ENCODE measurements at regions of chr9 and their contacts with region 1.

Region 1: DNA sequence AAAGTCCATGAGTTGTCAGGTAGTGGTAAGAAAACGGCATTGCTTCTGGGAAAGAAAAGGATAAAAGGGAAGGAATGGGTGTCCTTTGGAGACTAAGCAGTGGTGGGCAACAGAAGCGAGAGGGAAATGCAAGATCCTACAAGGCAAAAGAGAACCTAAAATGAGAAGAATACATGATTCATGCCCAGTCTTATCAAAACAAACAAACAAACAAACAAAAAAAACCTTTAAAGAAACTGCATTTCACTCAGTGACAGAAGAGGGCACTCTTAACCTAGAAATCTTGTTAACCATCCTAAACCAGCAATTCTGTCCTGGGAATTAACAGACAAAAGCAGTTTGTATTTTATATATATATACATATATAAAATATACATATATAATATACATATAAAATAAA is 88.5 kb downstream of the SUSD1 start:
- DNase-seq: peak in 1 of 2 experiments; percentile 32
- H3K4me3 ChIP-seq: no peak overlapping the region
- H3K4me1 ChIP-seq: no peaks in the 10 kb centered on the region
- H3K27me3 ChIP-seq: no peaks in the 10 kb centered on the region

Region 2: DNA sequence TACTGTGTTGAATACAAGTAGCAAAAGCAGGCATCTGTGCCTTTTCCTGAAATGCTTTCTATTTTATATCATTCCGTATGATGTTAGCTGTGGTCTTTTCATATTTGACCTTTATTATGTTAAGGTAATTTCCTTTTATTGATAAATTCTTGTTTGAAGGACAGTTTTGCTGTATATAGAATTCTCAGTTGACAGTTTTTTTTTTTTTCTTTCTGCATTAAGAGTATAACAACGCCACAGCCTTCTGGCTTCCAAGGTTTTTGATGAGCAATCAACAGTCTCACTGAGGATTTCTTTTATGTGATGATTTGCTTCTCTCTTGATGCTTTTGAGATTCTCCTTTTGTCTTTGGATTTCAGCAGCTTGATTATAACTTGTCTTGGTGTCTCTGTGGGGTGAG is 538.0 kb before region 1 on chr9:
- in situ Hi-C with region 1: no loop called
- DNase-seq: no peak
- H3K4me3 ChIP-seq: no peak overlapping the region
- H3K4me1 ChIP-seq: no peaks in the 10 kb centered on the region
- H3K27me3 ChIP-seq: no peaks in the 10 kb centered on the region

Region 3: DNA sequence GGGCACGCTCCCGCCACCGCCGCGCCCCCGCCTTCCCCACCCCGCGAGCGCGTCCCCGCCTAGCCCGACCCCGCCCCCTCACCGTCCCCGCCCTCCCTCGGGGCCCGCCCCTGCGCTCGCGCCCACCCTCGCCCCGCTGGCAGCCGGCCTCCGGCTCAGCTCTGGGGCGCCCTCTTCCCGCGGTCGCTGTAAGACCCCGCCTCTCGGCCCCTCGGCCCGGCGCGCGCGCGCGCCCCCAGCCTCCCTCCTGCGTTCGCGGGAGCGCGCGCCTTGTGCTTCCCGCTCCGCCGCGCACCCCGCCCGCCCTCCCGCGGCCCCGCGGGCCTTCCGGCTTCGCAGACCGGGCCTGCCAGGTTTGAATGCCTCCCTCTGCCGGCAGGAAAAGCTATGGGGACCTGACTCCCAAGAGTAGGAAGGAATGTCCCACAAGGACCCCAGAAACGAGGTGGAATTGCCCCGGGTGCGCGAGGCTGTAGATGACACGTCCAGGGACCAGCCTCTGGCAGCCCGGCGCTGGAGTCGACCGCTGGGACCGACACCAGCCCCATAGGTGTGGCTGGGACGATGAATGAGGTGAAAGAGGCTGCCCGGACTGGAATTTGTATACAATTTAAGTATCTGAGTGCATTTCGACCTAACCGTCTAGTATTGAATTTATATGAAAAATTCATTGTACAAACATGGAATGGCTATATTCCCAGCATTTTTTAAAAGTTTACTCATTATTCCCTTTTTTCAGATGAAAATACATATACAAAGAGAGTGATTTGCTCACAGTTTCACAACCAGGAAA is 247.2 kb after region 1 on chr9:
- in situ Hi-C with region 1: no loop called
- DNase-seq: peak; percentile 89 to 95
- H3K4me3 ChIP-seq: peak overlapping the region; percentile 86
- H3K4me1 ChIP-seq: peaks cover 15% of the 10 kb centered on the region
- H3K27me3 ChIP-seq: no peaks in the 10 kb centered on the region

Region 4: GRCh38 chr9:112361601-112362000 is 275.0 kb after region 1 on chr9:
- in situ Hi-C with region 1: loop called (anchors 5 kb)
- DNase-seq: peak in 1 of 2 experiments; percentile 46
- H3K4me3 ChIP-seq: no peak overlapping the region
- H3K4me1 ChIP-seq: no peaks in the 10 kb centered on the region
- H3K27me3 ChIP-seq: peaks cover 2% of the 10 kb centered on the region; the same call in 1 of the 2 replicates

Region 5: GRCh38 chr9:112705768-112706427 is 619.3 kb after region 1 on chr9:
- in situ Hi-C with region 1: loop called (anchors 10 kb)
- DNase-seq: peak; percentile 59 to 67
- H3K4me3 ChIP-seq: no peak overlapping the region
- H3K4me1 ChIP-seq: no peaks in the 10 kb centered on the region
- H3K27me3 ChIP-seq: no peaks in the 10 kb centered on the region